Activated CD4-positive, alpha-beta memory T cell treated with anti-CD3 and anti-CD28 coated beads for 36 hours (primary cell): ENCODE measurements at regions of chr9 and their contacts with region 1.

Region 1: DNA sequence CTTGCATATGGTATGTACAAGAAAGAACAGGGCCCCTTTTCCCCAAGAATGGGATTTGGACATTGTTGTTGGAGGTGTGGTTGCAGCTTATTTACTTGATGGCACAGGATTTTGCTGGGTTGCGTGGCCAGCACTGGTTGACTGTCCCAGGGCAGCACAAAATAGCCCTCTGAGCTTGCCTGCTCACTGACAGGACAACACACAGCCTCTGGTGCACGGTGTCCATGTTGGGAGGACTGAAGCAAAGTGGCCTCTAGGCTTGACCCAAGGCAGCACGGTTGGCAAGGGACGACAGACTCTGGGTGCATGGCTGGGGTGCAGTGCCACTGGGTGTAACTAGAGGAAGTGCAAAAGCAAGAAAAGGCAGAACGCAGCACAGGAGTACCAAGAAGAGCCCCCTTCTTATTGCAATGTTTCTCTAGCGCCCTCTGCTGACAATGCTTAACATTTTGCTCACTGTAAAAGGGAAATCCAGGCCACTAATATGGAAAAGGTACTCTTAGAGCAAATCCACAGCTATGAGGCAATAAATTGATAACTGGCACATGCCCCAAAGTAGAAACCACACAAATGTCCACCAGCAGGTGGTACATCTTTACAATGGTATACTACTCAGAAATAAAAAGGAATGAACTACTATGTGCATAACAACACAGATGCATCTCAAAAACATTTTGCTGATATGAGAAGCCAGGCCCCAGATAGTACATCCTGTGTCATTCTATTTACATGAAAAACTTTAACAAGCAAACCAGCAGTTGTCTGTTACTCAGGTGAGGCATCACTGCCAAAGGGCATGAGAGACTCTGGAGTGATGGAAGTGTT is 47.4 kb upstream of the BARX1 start:
- DNase-seq: peak; percentile 22
- H3K4me3 Mint-ChIP-seq: no peak overlapping the region
- H3K27ac Mint-ChIP-seq: no peak overlapping the region
- H3K4me1 Mint-ChIP-seq: no peaks in the 10 kb centered on the region
- H3K27me3 Mint-ChIP-seq: peaks cover 5% of the 10 kb centered on the region

Region 2: DNA sequence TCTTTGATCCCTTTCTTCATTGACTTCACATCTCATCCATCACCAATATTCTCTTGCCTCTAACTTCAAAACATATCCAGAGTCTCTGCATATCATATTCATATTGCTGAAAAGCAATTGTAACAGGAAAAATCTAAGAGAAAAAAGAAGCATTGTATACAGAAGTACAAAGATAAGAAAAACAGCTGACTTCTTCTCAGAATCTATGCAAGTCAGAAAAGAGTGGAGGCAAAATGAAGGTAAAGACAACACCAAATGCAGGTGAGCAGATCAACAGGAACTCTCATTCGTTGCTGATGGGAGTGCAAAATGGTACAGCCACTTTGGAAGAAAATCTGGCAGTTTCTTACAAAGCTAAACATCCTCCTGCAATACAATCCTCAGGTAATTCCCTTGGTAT is 270.6 kb before region 1 on chr9:
- CTCF ChIA-PET with region 1: no interaction called
- POLR2A ChIA-PET with region 1: no interaction called
- intact Hi-C with region 1: no loop called
- DNase-seq: no peak
- H3K4me3 Mint-ChIP-seq: no peak overlapping the region
- H3K27ac Mint-ChIP-seq: no peak overlapping the region
- H3K4me1 Mint-ChIP-seq: no peaks in the 10 kb centered on the region
- H3K27me3 Mint-ChIP-seq: peaks cover 30% of the 10 kb centered on the region

Region 3: DNA sequence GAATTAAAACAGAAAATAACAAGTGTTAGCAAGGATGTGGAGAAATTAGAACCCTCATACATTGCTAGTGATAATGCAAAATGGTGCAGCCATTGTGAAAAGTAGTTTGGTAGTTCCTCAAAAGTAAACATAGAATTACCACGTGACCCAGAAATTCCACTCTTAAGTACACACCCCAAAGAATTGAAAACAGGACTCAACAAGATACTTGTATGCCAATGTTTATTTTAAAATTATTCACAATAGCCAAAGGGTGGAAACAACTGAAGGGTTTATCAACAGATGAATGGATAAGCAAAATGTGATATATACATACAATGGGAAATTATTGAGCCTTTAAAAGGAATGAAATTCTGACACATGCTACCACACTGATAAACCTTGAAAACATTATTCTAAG is 117.7 kb before region 1 on chr9:
- CTCF ChIA-PET with region 1: no interaction called
- POLR2A ChIA-PET with region 1: no interaction called
- intact Hi-C with region 1: no loop called
- DNase-seq: no peak
- H3K4me3 Mint-ChIP-seq: no peak overlapping the region
- H3K27ac Mint-ChIP-seq: no peak overlapping the region
- H3K4me1 Mint-ChIP-seq: no peaks in the 10 kb centered on the region
- H3K27me3 Mint-ChIP-seq: peaks cover 13% of the 10 kb centered on the region

Region 4: DNA sequence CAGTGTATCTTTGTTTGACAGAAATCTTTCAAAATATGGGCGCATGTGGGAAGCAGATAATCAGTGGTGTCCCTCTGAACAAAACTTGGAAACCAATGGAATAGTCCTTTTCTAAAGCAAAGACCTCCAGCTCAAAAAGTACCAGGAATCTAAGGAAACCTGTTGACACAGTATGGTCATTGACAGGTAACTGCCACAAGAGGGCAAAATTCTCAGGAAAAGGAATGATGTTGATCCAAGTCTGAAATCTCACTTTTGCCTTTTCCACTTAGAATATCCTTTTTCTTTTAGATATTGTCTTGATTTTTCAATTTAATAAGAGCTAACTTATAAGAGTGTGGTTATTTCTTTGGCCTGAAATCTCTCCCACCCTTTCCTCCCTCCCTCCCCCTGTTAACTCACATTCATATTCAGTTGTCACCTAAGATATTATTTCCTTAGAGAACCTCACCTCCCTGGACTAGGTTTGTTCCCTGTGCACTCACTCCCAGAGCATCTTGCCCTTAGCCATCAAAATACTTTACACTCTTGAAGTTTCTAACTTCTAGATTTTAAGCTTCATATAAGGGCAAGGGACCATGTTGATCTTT is 11.6 kb after region 1 on chr9:
- CTCF ChIA-PET with region 1: interaction called, 36 read pairs
- POLR2A ChIA-PET with region 1: no interaction called
- intact Hi-C with region 1: no loop called
- DNase-seq: no peak
- H3K4me3 Mint-ChIP-seq: no peak overlapping the region
- H3K27ac Mint-ChIP-seq: no peak overlapping the region
- H3K4me1 Mint-ChIP-seq: peaks cover 5% of the 10 kb centered on the region
- H3K27me3 Mint-ChIP-seq: no peaks in the 10 kb centered on the region

Region 5: GRCh38 chr9:94139672-94140417 is 137.3 kb after region 1 on chr9:
- CTCF ChIA-PET with region 1: no interaction called
- POLR2A ChIA-PET with region 1: no interaction called
- intact Hi-C with region 1: no loop called
- DNase-seq: no peak
- H3K4me3 Mint-ChIP-seq: no peak overlapping the region
- H3K27ac Mint-ChIP-seq: no peak overlapping the region
- H3K4me1 Mint-ChIP-seq: no peaks in the 10 kb centered on the region
- H3K27me3 Mint-ChIP-seq: no peaks in the 10 kb centered on the region